ENCODE measurements at regions of chr15 and their contacts with region 1.

Region 1: GRCh38 chr15:63157118-63157843 is at the start of gene RPS27L:
- DNase-seq: peak; percentile 80 to 95 (median 92)
- H3K4me3 ChIP-seq: peak within 1 kb of the TSS; percentile 51 to 99 (median 90)
- H3K27ac ChIP-seq: peak within 1 kb of the TSS; percentile 69 to 98 (median 94)
- H3K27me3 ChIP-seq: no peaks in the 10 kb centered on the region
- CTCF ChIP-seq: peak in 21 of 56 donors; percentile 4 to 35 (median 18)
- total RNA-seq, gene RPS27L: 35.0 to 86.0 (median 57.2) TPM

Region 2: GRCh38 chr15:62896978-62897647 is 260.2 kb before region 1 on chr15:
- intact Hi-C with region 1: no loop called
- DNase-seq: peak in 6 of 10 donors; percentile 25 to 85 (median 42)
- H3K4me3 ChIP-seq: peak overlapping the region in 15 of 59 donors; percentile 1 to 28 (median 16)
- H3K27ac ChIP-seq: peak overlapping the region in 2 of 59 donors; percentile 19 to 48
- H3K27me3 ChIP-seq: peaks cover 0 to 5% (median 0%) of the 10 kb centered on the region in 45 donors
- CTCF ChIP-seq: no peak

Region 3: GRCh38 chr15:63104727-63105126 is 52.6 kb before region 1 on chr15:
- intact Hi-C with region 1: no loop called
- DNase-seq: no peak
- H3K4me3 ChIP-seq: no peak overlapping the region
- H3K27ac ChIP-seq: no peak overlapping the region
- H3K27me3 ChIP-seq: peaks cover 0 to 4% (median 0%) of the 10 kb centered on the region in 45 donors
- CTCF ChIP-seq: no peak

Region 4: DNA sequence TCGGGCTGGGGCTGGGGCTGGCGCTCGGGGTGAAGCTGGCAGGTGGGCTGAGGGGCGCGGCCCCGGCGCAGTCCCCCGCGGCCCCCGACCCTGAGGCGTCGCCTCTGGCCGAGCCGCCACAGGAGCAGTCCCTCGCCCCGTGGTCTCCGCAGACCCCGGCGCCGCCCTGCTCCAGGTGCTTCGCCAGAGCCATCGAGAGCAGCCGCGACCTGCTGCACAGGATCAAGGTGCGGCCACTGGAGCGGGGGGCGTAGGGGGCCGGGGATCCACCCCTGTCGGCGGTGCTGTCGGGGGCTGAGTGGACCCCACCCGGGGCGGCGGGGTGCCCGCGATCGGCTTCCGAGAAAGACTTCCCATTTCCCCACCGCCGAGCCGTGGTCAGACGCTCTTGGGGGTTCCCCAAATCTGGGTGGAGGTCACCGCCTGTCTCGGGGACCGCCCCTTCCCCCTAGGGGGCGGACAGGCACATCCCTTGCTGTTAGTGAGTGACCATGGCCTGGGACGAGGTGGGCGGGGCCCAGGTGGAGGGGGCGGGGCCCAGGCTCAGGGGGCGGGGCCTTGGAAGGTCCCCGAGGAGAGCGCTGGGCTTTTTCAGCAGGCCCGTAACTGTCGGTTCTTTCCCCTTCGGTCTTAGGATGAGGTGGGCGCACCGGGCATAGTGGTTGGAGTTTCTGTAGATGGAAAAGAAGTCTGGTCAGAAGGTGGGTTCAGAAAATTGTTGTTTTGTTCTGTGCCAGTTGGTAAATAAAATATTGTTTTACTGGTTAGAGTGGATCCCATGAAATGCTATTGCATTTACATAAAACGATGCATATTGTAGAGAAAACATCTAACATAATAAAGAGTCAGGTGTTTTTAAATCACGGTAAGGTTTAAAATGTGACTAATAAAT is 35.0 kb before region 1 on chr15:
- intact Hi-C with region 1: loop called in 1 of 2 experiments (anchors 5 kb)
- DNase-seq: peak; percentile 57 to 86 (median 65)
- H3K4me3 ChIP-seq: peak overlapping the region; percentile 58 to 100 (median 98)
- H3K27ac ChIP-seq: peak overlapping the region in 57 of 59 donors; percentile 13 to 95 (median 85)
- H3K27me3 ChIP-seq: no peaks in the 10 kb centered on the region
- CTCF ChIP-seq: peak in 24 of 56 donors; percentile 4 to 57 (median 27)

Region 5: GRCh38 chr15:63277038-63277892 is 120.0 kb after region 1 on chr15 and contains the start of gene APH1B:
- intact Hi-C with region 1: loop called in 1 of 2 experiments (anchors 2 kb)
- DNase-seq: peak; percentile 52 to 84 (median 75)
- H3K4me3 ChIP-seq: peak within 1 kb of the TSS; percentile 66 to 98 (median 90)
- H3K27ac ChIP-seq: peak within 1 kb of the TSS; percentile 60 to 97 (median 90)
- H3K27me3 ChIP-seq: no peaks in the 10 kb centered on the region
- CTCF ChIP-seq: peak in 3 of 56 donors; percentile 10 to 15 (median 13)
- total RNA-seq, gene APH1B: 12.8 to 48.9 (median 28.4) TPM